Right cardiac atrium (tissue), 5 donors: ENCODE measurements at regions of chr6 and their contacts with region 1.

Region 1: DNA sequence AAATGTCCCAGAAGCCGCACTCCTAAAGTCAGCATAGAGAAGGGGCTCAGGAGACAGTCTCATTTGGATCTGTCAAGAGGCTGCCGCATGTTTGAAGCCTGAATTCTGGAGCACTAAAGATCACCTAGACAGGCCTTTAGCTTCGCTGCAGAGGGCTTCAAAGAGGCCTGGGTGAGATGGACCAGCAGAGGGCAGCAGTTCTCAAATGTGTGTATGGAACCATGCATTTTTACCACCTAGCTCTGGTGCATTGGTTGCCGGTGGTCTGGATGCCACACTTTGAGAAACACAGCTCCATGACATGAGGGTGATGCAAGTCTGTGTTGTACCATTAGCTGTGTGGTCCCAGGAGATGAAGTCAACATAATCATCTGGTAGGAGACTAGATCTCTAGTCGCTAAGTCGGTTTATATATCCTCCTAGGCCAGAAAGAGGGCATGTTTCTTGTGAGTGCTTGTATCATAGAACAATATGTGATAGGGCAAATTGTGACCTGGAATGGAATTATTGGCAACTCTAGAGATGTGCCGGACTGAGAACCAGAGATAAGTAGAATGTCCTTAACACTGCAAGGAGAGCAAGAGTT is 64.8 kb downstream of the KIAA0319 start:
- DNase-seq: peak; percentile 72 to 89 (median 80)
- ATAC-seq: peak; percentile 76 to 78
- H3K4me3 ChIP-seq: no peak overlapping the region
- H3K27ac ChIP-seq: no peak overlapping the region
- H3K4me1 ChIP-seq: peaks cover 2% of the 10 kb centered on the region
- H3K27me3 ChIP-seq: no peaks in the 10 kb centered on the region

Region 2: GRCh38 chr6:24513602-24514001 is 67.6 kb before region 1 on chr6:
- intact Hi-C with region 1: no loop called
- DNase-seq: no peak
- ATAC-seq: no peak
- H3K4me3 ChIP-seq: no peak overlapping the region
- H3K27ac ChIP-seq: no peak overlapping the region
- H3K4me1 ChIP-seq: no peaks in the 10 kb centered on the region
- H3K27me3 ChIP-seq: no peaks in the 10 kb centered on the region

Region 3: DNA sequence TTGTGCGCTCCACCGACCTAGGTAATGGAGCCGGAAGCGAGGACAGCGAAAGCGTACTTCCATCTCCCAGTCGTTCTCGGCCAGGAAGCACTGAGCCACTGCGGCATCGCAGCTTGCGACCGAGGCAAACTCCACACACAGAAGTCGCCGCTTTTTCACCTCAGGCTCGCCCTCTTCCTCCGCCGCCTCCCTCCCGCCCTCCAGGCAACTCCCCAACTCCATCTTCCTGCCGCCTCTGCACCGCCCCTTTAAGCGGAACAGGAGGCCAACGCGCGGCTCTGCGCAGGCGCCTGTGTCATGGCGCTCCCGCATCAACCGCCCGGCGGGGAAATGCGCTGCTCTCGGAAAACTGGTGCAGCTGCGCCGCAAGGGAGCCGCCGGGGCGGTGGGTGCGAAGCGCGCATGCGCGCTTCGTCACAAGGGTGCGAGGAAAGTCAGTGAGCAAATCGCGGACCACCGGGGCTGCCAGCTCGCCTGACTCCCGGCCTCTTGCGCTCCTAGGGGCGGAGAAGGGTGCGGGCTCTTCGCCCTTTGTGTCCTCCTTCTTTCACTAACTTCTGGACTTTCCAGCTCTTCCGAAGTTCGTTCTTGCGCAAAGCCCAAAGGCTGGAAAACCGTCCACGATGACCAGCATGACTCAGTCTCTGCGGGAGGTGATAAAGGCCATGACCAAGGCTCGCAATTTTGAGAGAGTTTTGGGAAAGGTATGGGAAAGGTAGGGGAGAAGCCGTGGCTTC is 85.6 kb after region 1 on chr6 and contains the starts of genes ACOT13 and TDP2:
- intact Hi-C with region 1: loop called in 1 of 4 experiments (anchors 10 kb)
- DNase-seq: peak; percentile 97 to 99 (median 99)
- ATAC-seq: peak; percentile 100
- H3K4me3 ChIP-seq: peak within 1 kb of the TSS; percentile 79
- H3K27ac ChIP-seq: peak within 1 kb of the TSS; percentile 95
- H3K4me1 ChIP-seq: peaks cover 6% of the 10 kb centered on the region
- H3K27me3 ChIP-seq: no peaks in the 10 kb centered on the region
- total RNA-seq, gene ACOT13: 63.7 to 92.1 (median 77.6) TPM
- total RNA-seq, gene TDP2: 42.4 to 45.4 (median 44.2) TPM

Region 4: DNA sequence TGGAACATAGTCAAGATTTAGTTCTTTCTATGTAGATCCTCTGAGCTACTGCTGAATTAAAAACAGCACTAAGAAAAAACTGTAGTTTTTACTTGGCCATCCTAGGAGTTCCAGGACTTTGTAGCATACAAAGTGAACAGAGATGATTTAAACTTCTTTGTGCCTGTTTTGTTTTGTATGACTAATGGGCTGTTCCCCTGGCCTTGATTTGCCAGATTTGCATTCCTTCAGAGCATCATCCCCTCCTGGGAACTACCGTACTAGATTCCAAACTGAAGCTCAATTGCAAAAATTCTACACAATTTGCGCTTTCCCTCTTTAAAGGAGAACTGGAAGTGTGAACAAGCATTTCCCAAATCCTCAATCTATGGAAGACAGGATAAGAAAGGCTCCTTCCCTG is 108.8 kb after region 1 on chr6:
- intact Hi-C with region 1: loop called (anchors 2 to 5 kb)
- DNase-seq: no peak
- ATAC-seq: no peak
- H3K4me3 ChIP-seq: no peak overlapping the region
- H3K27ac ChIP-seq: no peak overlapping the region
- H3K4me1 ChIP-seq: no peaks in the 10 kb centered on the region
- H3K27me3 ChIP-seq: no peaks in the 10 kb centered on the region

Region 5: GRCh38 chr6:24761193-24761835 is 180.1 kb after region 1 on chr6:
- intact Hi-C with region 1: loop called in 3 of 4 experiments (anchors 5 kb)
- DNase-seq: peak in 1 of 3 donors; percentile 53
- ATAC-seq: peak; percentile 33 to 47
- H3K4me3 ChIP-seq: no peak overlapping the region
- H3K27ac ChIP-seq: no peak overlapping the region
- H3K4me1 ChIP-seq: no peaks in the 10 kb centered on the region
- H3K27me3 ChIP-seq: no peaks in the 10 kb centered on the region

Region 6: DNA sequence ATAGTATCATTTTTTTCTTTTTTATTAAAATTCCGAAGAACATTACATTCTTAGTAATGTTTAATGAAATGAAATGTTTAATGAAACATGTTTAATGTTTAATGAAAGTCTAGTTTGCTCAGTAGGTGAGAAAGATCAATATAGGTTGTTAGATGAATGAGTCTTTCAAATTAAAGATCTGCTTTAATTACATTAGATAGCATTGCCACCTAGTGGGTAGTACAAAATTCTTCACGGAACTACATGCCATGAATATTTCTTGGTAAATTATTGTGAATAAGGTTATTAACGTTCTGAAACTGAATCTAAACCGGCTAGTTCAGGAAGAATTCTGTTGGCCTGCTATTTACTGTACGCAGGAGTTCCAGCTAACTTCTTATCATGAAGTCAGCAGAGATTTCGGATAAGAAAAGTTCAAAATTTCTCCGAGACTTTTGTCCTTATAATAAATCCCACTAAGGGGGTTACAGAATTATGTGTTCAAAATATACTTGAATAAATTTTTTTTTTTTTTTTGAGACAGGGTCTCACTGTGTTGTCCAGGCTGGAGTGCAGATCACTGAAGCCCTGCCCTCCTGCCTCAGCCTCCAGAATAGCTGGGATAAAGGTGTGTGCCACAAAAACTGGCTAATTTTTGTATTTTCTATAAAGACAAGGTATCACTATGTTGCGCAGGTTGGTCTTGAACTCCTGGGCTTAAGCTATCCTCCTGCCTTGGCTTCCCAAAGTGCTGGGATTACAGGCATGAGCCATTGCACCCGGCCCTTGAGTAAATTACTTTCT is 185.7 kb after region 1 on chr6:
- intact Hi-C with region 1: loop called in 3 of 4 experiments (anchors 5 kb)
- DNase-seq: no peak
- ATAC-seq: peak; percentile 51 to 52
- H3K4me3 ChIP-seq: no peak overlapping the region
- H3K27ac ChIP-seq: no peak overlapping the region
- H3K4me1 ChIP-seq: no peaks in the 10 kb centered on the region
- H3K27me3 ChIP-seq: no peaks in the 10 kb centered on the region

Region 7: DNA sequence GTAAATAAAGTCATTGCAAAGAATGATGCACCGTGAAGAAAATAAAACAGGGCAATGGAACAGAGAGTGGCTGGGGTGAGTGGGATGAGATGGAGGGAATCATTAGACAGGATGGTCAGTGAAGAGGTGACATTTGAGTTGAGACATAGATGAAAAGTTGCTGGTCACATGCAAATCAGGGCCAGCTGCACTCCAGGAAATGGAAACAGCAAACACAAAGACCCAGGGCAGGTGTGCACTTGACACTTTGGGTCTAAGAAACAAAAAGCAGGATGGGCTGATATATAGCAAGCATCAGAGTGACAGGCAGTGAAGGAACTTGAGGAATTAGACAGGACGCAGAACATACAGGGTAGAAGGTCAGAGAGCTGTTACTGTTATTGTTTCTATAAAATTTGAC is 526.0 kb after region 1 on chr6:
- intact Hi-C with region 1: no loop called
- DNase-seq: no peak
- ATAC-seq: no peak
- H3K4me3 ChIP-seq: no peak overlapping the region
- H3K27ac ChIP-seq: no peak overlapping the region
- H3K4me1 ChIP-seq: no peaks in the 10 kb centered on the region
- H3K27me3 ChIP-seq: no peaks in the 10 kb centered on the region